Panc1 (cell line): ENCODE measurements at regions of chr7 and their contacts with region 1.

Region 1: DNA sequence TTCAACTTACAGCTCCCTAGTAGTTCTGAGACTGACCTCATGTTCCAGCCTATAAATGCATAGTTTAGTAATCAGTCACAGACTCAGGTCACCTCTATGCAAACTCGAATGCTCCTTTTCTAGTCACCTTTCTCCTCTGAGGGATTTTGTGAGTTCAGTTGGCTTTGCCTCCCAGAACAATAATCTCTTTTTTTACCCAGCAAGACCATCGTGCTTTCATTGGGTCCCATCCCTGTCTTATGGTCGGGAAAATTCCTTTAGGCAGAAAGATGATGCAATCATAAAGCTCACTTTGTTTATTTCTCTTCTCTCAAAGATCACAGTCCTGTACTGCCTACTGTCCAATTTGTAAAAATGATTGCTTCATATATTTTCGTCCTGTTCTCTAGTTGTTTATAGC is 38.4 kb downstream of the TWIST1 start:
- DNase-seq: peak; percentile 62
- ATAC-seq: peak; percentile 88
- H3K4me3 ChIP-seq: peak overlapping the region in 1 of 2 experiments; percentile 14; a peak in 2 of 4 replicates
- H3K27ac ChIP-seq: peak overlapping the region; percentile 62; the same call in 1 of the 2 replicates
- H3K4me1 ChIP-seq: peaks cover 6% of the 10 kb centered on the region; the same call in 1 of the 2 replicates
- H3K27me3 ChIP-seq: no peaks in the 10 kb centered on the region
- CTCF ChIP-seq: no peak

Region 2: DNA sequence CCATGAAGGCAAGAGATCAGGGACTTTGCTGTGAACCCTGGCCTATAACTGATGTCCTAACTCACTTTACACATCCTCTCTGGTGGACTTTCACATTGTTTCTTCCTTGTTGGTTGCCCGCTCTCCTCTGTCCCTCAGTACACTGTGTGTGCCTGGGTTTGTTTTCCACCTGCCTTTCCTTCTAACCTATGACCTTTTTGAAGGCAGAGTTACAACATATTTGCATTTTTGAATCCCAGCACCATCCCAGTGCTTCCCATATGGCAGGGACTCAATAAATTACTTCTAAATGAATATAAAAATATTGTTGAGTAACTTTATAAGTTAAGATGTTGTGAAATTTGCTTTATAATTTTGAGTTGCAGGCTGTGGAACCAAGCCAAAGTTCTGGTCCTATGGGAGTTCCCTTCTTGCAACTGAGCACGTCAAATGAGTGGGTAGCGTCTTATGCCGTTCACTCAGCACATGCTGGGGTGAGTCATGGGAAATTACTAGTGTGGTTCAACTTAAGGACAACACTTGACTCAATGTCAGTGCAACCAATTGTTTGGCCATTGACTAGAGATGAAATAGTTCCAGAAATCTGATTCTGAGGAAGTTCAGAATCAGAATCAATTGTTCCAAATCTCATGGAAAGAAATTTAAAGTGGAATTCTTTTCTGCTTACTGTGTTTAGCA is 212.6 kb before region 1 on chr7:
- CTCF ChIA-PET with region 1: no interaction called
- POLR2A ChIA-PET with region 1: no interaction called
- in situ Hi-C with region 1: no loop called
- intact Hi-C with region 1: no loop called
- DNase-seq: peak; percentile 45
- ATAC-seq: no peak
- H3K4me3 ChIP-seq: no peak overlapping the region
- H3K27ac ChIP-seq: no peak overlapping the region
- H3K4me1 ChIP-seq: no peaks in the 10 kb centered on the region
- H3K27me3 ChIP-seq: no peaks in the 10 kb centered on the region
- CTCF ChIP-seq: no peak

Region 3: GRCh38 chr7:18978108-18978495 is 101.0 kb before region 1 on chr7:
- CTCF ChIA-PET with region 1: no interaction called
- POLR2A ChIA-PET with region 1: interaction called, 21 read pairs
- in situ Hi-C with region 1: no loop called
- intact Hi-C with region 1: no loop called
- DNase-seq: no peak
- ATAC-seq: peak; percentile 69
- H3K4me3 ChIP-seq: no peak overlapping the region
- H3K27ac ChIP-seq: peak overlapping the region; percentile 62
- H3K4me1 ChIP-seq: 0 out of 2 replicates have a peak, but pooled peaks cover 5% of the 10 kb centered on the region
- H3K27me3 ChIP-seq: no peaks in the 10 kb centered on the region
- CTCF ChIP-seq: no peak

Region 4: DNA sequence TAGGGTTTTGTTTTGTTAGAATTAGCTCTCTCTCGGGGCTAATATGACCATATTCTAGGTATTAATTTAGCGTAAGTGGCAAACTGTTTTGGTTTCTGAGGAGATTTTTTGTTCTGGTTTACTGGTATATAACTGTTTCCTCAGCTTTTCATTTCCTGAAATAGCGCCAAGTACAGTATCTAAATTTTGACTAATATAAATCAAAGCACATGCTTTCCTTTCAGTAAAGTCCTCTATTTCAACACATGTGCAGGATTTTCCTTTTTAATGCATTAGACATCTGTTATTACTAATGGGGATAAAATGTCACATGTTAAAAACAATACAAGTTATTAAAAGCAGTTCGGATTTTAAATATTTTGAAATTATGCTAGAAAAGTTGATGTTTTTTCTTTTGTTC is 54.8 kb after region 1 on chr7:
- CTCF ChIA-PET with region 1: no interaction called
- POLR2A ChIA-PET with region 1: no interaction called
- in situ Hi-C with region 1: no loop called
- intact Hi-C with region 1: no loop called
- DNase-seq: no peak
- ATAC-seq: no peak
- H3K4me3 ChIP-seq: no peak overlapping the region
- H3K27ac ChIP-seq: no peak overlapping the region
- H3K4me1 ChIP-seq: no peaks in the 10 kb centered on the region
- H3K27me3 ChIP-seq: no peaks in the 10 kb centered on the region
- CTCF ChIP-seq: no peak